ENCODE measurements at regions of chr17 and their contacts with region 1.

Region 1: GRCh38 chr17:78360371-78361224 is 721 bp upstream of the SOCS3 start:
- DNase-seq: peak; percentile 92
- ATAC-seq: peak; percentile 32
- H3K4me3 Mint-ChIP-seq: peak overlapping the region; percentile 87
- H3K27ac Mint-ChIP-seq: peak overlapping the region; percentile 72
- H3K4me1 Mint-ChIP-seq: peaks cover 41% of the 10 kb centered on the region
- H3K27me3 Mint-ChIP-seq: peaks cover 6% of the 10 kb centered on the region
- CTCF ChIP-seq: peak; percentile 49

Region 2: DNA sequence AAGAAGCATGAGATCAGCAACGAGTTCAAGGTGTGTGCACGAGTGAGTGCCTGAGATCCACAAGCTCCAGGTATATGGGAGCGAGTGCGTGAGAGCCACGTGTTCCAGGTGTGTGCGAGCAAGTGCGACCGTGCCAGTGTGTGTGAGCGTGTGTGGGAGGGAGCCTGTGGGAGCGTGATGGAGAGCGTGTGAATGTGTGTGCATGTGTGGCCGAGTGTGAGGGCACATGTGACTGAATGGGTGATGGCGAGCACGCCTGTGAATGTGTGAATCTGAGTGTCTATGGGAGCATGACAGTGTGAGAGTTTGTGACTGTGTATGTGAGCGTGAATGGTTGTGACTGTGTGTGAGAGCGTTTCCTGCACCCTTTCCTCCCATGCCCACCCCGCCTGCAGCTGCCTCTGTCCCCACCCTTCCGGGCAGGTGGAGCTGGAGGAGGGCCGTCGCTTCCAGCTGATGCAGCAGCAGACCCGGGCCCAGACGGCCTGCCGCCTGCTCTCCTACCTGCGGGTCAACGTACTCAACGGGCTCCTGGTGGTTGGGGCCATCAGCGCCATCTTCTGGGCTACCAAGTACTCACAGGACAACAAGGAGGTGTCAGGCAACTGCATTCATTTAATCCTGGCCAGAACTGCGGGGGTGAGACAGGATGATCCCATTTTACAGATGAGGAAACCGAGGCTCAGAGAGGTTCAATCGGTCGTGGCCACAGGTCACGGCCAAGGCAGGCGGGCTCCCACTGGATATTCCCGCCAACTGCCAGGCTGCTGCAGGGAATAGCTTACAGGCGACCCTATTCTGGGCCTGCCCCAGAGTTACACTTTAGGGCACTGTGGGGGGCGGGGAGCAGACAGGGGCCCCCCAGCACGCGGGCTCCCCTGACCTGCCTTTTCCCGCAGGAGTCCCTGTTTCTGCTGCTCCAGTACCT is 226.4 kb before region 1 on chr17:
- CTCF ChIA-PET with region 1: no interaction called
- POLR2A ChIA-PET with region 1: interaction called, 6 read pairs
- intact Hi-C with region 1: loop called (anchors 5 kb)
- DNase-seq: peak; percentile 59
- ATAC-seq: peak; percentile 15
- H3K4me3 Mint-ChIP-seq: peak overlapping the region; percentile 95
- H3K27ac Mint-ChIP-seq: peak overlapping the region; percentile 81
- H3K4me1 Mint-ChIP-seq: peaks cover 87% of the 10 kb centered on the region
- H3K27me3 Mint-ChIP-seq: no peaks in the 10 kb centered on the region
- CTCF ChIP-seq: peak; percentile 69

Region 3: GRCh38 chr17:78250891-78251794 is 109.5 kb before region 1 on chr17:
- CTCF ChIA-PET with region 1: interaction called, 9 read pairs
- POLR2A ChIA-PET with region 1: interaction called, 7 read pairs
- intact Hi-C with region 1: loop called (anchors 1 kb)
- DNase-seq: peak; percentile 82
- ATAC-seq: peak; percentile 81
- H3K4me3 Mint-ChIP-seq: no peak overlapping the region
- H3K27ac Mint-ChIP-seq: no peak overlapping the region
- H3K4me1 Mint-ChIP-seq: peaks cover 34% of the 10 kb centered on the region
- H3K27me3 Mint-ChIP-seq: no peaks in the 10 kb centered on the region
- CTCF ChIP-seq: peak; percentile 78

Region 4: GRCh38 chr17:78266231-78266631 is 94.4 kb before region 1 on chr17:
- CTCF ChIA-PET with region 1: no interaction called
- POLR2A ChIA-PET with region 1: no interaction called
- intact Hi-C with region 1: no loop called
- DNase-seq: no peak
- ATAC-seq: no peak
- H3K4me3 Mint-ChIP-seq: no peak overlapping the region
- H3K27ac Mint-ChIP-seq: no peak overlapping the region
- H3K4me1 Mint-ChIP-seq: peaks cover 3% of the 10 kb centered on the region
- H3K27me3 Mint-ChIP-seq: no peaks in the 10 kb centered on the region
- CTCF ChIP-seq: no peak

Region 5: DNA sequence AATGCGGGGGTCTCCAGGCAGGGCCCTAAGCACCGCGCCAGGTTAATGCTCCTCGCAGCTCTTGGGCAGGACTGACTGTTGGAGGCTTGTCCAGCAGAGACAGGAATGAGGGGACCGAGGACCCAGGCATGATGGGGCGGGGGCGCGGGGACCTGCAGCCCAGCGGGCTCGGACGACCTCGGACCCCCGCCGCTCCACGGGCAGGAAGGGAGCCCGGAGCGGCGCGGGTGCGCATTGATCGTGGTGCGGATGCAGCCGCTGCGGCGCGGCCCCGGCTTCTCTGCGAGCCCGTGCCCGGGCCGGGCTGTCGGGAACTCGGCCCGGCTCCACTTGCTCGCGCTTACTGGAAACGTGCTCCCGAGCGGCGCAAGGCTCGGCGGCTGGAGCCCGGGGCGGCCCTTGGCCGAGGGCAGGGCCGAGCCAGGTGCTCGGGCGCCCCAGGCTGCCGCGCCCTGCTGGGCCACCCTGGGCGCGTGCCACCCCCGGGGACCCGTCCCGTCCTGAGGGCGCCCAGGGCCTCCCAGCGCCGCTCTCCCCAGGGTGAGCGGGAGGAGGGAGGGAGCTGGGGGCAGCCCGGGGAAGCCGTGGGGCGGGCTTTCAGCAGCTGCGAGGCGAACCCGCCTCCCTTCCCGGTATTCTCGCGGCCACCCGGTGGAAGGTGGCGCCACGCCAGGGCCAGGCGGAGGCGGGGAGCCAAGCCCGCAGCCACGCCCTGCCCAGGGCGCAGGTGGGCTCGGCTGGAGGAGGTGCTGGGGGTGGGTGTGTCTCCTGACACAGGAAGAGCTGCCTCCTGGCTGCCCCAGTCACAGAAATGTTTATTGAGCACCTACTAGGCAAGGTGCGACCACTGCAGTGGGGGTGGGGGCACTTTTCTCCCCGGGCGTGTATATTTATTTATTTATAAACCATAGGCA is 46.6 kb before region 1 on chr17:
- CTCF ChIA-PET with region 1: interaction called, 6 read pairs
- POLR2A ChIA-PET with region 1: interaction called, 21 read pairs
- intact Hi-C with region 1: loop called (anchors 1 kb)
- DNase-seq: peak; percentile 65
- ATAC-seq: peak; percentile 78
- H3K4me3 Mint-ChIP-seq: peak overlapping the region; percentile 66
- H3K27ac Mint-ChIP-seq: peak overlapping the region; percentile 24
- H3K4me1 Mint-ChIP-seq: peaks cover 43% of the 10 kb centered on the region
- H3K27me3 Mint-ChIP-seq: peaks cover 6% of the 10 kb centered on the region
- CTCF ChIP-seq: no peak

Region 6: DNA sequence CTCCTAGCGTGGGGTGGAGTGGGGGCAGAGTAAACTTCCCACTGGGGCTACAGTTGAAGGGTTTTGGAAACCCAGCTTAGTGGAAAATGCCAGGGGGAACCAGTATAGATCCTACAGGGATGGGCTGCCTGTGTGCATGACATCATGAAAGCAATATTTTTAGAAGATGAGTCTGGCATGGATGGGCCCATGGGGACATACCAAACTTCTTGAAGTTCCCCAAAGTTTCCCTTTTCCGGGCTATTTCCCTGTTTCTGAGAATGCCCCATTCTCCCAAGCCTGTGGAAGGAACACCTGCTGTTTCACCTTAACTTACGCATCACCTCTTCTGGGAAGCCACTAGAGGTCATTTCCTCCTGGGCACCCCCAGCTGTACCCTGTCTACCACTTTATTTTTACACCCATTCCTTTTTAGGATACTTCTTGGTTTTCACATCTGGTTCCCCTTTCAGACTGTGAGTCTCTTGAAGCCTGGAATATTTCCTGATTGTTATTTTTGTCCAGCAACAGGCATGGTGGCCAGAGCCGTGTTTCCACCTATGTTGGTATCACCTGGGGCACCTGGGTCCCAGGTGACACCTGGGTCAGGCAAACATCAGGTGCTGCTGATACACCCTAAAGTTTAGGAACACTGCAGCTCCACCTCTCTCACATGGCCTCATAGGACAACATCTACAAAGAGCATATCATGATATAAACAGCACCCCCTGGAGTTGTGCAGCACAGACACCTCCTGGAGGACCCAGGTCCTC is 10.5 kb before region 1 on chr17:
- CTCF ChIA-PET with region 1: interaction called, 4 read pairs
- POLR2A ChIA-PET with region 1: interaction called, 27 read pairs
- intact Hi-C with region 1: no loop called
- DNase-seq: no peak
- ATAC-seq: no peak
- H3K4me3 Mint-ChIP-seq: peak overlapping the region; percentile 24
- H3K27ac Mint-ChIP-seq: peak overlapping the region; percentile 74
- H3K4me1 Mint-ChIP-seq: peaks cover 82% of the 10 kb centered on the region
- H3K27me3 Mint-ChIP-seq: no peaks in the 10 kb centered on the region
- CTCF ChIP-seq: no peak

Region 7: GRCh38 chr17:78421484-78422266 is 61.1 kb after region 1 on chr17:
- CTCF ChIA-PET with region 1: interaction called, 50 read pairs
- POLR2A ChIA-PET with region 1: interaction called, 4 read pairs
- intact Hi-C with region 1: loop called (anchors 1 kb)
- DNase-seq: peak; percentile 73
- ATAC-seq: peak; percentile 98
- H3K4me3 Mint-ChIP-seq: no peak overlapping the region
- H3K27ac Mint-ChIP-seq: no peak overlapping the region
- H3K4me1 Mint-ChIP-seq: peaks cover 2% of the 10 kb centered on the region
- H3K27me3 Mint-ChIP-seq: no peaks in the 10 kb centered on the region
- CTCF ChIP-seq: peak; percentile 69

Region 8: GRCh38 chr17:78840725-78841611 is 480.4 kb after region 1 on chr17 and contains the start of gene USP36:
- CTCF ChIA-PET with region 1: no interaction called
- POLR2A ChIA-PET with region 1: no interaction called
- intact Hi-C with region 1: loop called (anchors 1 kb)
- DNase-seq: peak; percentile 99
- ATAC-seq: peak; percentile 85
- H3K4me3 Mint-ChIP-seq: peak within 1 kb of the TSS; percentile 93
- H3K27ac Mint-ChIP-seq: peak within 1 kb of the TSS; percentile 94
- H3K4me1 Mint-ChIP-seq: peaks cover 42% of the 10 kb centered on the region
- H3K27me3 Mint-ChIP-seq: no peaks in the 10 kb centered on the region
- CTCF ChIP-seq: no peak
- total RNA-seq, gene USP36: 93.8 and 107 TPM in 2 replicates